PC-3 (cell line): ENCODE measurements at regions of chr12 and their contacts with region 1.

Region 1: DNA sequence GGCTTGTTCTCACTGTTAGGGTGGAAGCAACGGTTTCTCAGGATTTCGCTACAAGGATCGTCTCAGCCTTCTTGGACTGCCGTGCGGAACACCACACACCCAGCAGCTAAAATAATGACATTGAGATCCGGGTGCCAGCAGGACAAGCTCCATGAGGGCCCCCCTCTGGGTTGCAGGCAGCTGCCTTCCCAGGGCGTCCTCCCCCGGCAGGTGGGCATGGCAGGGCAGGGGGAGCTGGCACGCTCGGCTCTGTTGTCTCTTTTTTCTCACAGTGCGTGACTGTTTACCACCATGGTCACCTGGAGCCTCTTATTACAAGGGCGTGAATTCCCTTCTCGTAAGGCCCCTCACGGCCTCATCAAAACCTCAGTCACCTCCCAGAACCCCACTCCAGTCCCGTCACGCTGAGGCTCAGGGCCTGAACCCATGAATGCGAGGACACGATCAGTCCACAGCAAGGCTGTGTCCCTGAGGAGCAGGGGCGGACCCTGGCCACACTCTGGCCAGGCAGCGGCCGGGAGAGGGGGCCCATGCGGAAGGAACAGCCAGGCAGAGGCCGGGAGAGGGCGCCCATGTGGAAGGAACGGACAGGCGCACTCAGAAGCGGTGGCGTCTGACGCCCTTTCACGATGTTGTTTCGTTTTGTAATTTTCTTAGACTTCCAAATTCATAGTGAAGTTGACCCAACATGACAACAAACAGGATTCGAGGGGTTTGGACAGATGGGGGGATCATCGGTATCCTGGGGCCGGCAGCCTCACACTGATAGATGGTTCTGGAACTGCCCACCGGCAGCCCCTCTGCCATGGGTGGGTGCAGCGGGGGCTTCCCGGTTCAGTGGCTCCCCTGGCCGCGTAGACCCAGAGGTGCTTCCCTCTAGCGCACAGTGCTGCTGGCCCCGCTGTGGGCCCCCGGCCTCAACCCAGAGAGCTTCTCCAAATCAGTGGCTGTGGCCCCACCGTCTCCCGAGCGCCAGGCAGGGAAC is 10.0 kb downstream of the LRCOL1 start:
- DNase-seq: peak; percentile 76
- ATAC-seq: peak; percentile 76
- H3K4me3 ChIP-seq: peak overlapping the region; percentile 58
- H3K27ac ChIP-seq: no peak overlapping the region
- H3K4me1 ChIP-seq: peaks cover 13% of the 10 kb centered on the region
- H3K27me3 ChIP-seq: peaks cover 23% of the 10 kb centered on the region
- CTCF ChIP-seq: peak; percentile 93

Region 2: GRCh38 chr12:132614861-132615578 is 14.7 kb after region 1 on chr12:
- CTCF ChIA-PET with region 1: interaction called, 6 read pairs
- POLR2A ChIA-PET with region 1: no interaction called
- intact Hi-C with region 1: loop called (anchors 1 kb)
- DNase-seq: peak; percentile 90
- ATAC-seq: peak; percentile 97
- H3K4me3 ChIP-seq: no peak overlapping the region
- H3K27ac ChIP-seq: no peak overlapping the region
- H3K4me1 ChIP-seq: no peaks in the 10 kb centered on the region
- H3K27me3 ChIP-seq: peaks cover 38% of the 10 kb centered on the region
- CTCF ChIP-seq: peak; percentile 97

Region 3: DNA sequence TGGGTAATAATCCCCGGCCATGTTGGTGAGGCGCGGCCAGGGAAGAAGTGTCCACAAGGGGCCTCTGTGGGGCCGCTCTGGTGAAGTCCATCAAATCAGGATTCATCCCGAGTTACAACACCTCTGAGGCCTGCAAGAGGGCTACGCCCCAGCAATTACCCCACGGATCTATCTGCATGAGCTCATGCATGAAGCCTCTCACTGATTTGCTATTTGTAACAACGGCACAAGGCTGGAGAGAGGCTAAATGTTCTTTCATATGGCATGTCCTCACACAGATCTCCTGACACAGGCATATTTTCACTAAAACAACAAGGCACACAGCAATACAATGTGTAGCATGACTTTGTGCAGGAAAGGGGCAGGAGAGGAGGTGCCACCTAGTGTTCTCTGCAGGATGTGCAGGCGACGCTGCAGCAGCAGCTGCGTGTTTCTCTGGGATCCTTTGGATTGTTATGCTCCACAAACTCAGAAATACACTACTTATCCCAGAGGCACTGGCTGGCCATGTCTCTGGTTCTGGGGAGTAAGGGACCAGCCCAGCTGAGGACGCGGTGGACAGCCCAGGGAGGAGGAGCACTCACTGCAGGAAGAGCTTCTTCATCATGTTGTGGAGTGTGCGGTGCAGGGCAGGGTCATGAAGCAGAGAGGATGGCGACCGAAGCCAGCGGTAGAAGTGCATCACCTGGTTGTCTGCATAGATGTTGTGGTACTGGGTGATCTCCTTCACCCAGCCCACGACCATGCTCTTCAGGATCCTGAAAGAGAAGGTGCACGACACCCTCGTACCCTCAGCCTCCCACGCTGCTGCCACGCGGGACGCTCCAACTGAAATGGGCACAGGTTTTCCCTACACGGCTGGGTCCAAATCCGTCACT is 38.4 kb after region 1 on chr12:
- CTCF ChIA-PET with region 1: interaction called, 4 read pairs
- POLR2A ChIA-PET with region 1: no interaction called
- intact Hi-C with region 1: loop called (anchors 1 kb)
- DNase-seq: peak; percentile 63
- ATAC-seq: peak; percentile 90
- H3K4me3 ChIP-seq: no peak overlapping the region
- H3K27ac ChIP-seq: no peak overlapping the region
- H3K4me1 ChIP-seq: no peaks in the 10 kb centered on the region
- H3K27me3 ChIP-seq: no peaks in the 10 kb centered on the region
- CTCF ChIP-seq: peak; percentile 93